MCF 10A (cell line): ENCODE measurements at regions of chr2 and their contacts with region 1.

Region 1: GRCh38 chr2:63698825-63699548 is 110.2 kb downstream of the MDH1 start:
- DNase-seq: peak; percentile 92
- H3K4me3 Mint-ChIP-seq: peak overlapping the region; percentile 5
- H3K27ac Mint-ChIP-seq: peak overlapping the region; percentile 57
- H3K4me1 Mint-ChIP-seq: peaks cover 22% of the 10 kb centered on the region
- H3K27me3 Mint-ChIP-seq: no peaks in the 10 kb centered on the region
- CTCF ChIP-seq: peak; percentile 47

Region 2: GRCh38 chr2:63665846-63666475 is 33.0 kb before region 1 on chr2:
- CTCF ChIA-PET with region 1: no interaction called
- POLR2A ChIA-PET with region 1: no interaction called
- intact Hi-C with region 1: no loop called
- DNase-seq: peak; percentile 31
- H3K4me3 Mint-ChIP-seq: no peak overlapping the region
- H3K27ac Mint-ChIP-seq: peak overlapping the region; percentile 4
- H3K4me1 Mint-ChIP-seq: peaks cover 31% of the 10 kb centered on the region
- H3K27me3 Mint-ChIP-seq: no peaks in the 10 kb centered on the region
- CTCF ChIP-seq: no peak

Region 3: DNA sequence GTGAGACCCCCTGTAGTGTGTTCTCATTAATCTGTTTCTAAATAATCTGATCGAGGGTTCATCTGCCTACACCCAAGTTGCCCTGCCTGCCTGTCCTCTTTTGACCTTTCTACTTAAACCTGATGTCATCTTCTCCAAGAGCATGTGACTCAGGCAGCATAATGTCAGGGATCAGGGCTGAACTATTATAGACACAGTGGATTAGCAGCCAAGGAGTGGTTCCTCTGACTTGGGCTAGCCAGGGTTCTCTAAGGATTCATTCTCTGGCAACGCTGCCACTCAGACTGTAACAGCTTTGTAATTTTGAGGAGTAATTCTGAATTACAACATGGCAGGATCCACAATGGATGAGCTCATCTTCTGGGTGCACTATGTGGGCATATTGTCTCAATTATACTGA is 13.8 kb after region 1 on chr2:
- CTCF ChIA-PET with region 1: interaction called, 3 read pairs
- POLR2A ChIA-PET with region 1: interaction called, 10 read pairs
- intact Hi-C with region 1: no loop called
- DNase-seq: no peak
- H3K4me3 Mint-ChIP-seq: no peak overlapping the region
- H3K27ac Mint-ChIP-seq: no peak overlapping the region
- H3K4me1 Mint-ChIP-seq: no peaks in the 10 kb centered on the region
- H3K27me3 Mint-ChIP-seq: no peaks in the 10 kb centered on the region
- CTCF ChIP-seq: no peak

Region 4: DNA sequence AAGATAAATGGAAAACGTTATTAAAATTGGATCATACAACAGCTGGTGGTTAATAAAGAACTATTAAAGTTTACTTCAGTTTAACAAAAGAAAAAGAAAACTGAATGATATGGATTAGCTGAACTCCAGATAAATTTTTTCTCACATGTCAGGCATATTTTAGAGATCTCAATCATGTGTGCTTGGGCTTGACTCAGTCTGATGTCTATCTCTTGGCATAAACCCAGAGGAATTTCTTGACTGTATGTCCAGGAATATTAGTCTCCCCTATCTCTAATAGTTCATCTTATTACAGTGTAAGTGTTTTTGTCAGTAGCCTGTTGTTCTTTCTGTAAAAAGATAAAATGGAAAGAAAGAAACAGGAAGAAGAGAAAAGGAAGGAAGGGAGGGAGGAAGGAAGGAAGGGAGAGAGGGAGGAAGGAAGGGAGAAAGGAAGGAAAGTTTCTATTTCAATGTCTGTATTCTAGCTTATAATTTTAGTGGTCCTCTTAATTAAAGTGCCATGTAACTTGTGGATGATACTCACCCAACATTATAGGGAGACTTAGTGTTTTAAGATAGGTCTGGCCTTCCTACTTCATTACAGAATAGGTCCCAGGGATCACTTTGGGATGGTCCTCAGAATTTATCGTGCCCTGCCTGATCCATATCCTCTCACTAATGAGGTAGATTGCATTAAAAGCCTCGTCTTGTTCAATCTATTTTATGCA is 43.0 kb after region 1 on chr2:
- CTCF ChIA-PET with region 1: interaction called, 18 read pairs
- POLR2A ChIA-PET with region 1: interaction called, 62 read pairs
- intact Hi-C with region 1: no loop called
- DNase-seq: no peak
- H3K4me3 Mint-ChIP-seq: no peak overlapping the region
- H3K27ac Mint-ChIP-seq: peak overlapping the region; percentile 12
- H3K4me1 Mint-ChIP-seq: peaks cover 34% of the 10 kb centered on the region
- H3K27me3 Mint-ChIP-seq: no peaks in the 10 kb centered on the region
- CTCF ChIP-seq: no peak

Region 5: DNA sequence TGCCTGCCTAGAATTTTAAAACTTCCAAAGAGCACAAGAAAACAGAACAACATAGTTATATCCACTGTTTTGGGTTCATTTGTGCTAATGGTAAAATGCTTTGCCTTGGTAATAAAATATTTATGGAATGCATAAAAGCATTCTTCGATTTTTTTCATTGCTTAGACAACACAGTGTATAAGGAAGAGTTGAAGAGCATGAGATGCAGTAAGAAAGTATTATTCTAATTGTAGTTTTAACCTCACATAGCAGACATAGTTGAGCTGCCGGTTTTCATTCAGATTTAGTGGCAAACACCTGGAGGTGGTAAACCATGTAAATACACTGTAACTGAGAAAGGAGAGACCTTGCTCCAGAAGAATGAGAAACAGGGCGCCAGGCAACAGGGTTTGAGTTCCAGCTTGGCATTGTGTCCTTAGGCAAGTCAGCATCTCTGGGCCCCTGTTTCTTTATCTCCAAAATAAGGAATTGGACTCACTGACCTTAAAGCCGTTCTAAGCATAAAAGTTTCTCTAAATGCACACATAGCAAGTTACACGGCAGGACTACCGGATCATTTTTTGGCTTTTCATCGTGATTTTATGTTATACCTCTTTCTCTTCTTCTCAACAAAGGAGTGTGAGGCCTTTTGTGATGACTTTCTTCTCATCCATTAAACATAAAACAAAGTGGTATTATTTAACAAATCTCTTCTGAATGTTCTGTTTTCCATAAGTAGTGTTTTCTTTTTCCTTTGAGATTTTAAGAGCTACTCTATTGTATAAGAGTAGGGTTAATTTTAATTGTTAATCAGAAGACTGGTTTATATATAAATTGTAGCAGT is 150.6 kb after region 1 on chr2:
- CTCF ChIA-PET with region 1: interaction called, 114 read pairs
- POLR2A ChIA-PET with region 1: interaction called, 229 read pairs
- intact Hi-C with region 1: no loop called
- DNase-seq: no peak
- H3K4me3 Mint-ChIP-seq: no peak overlapping the region
- H3K27ac Mint-ChIP-seq: peak overlapping the region; percentile 91
- H3K4me1 Mint-ChIP-seq: peaks cover 55% of the 10 kb centered on the region
- H3K27me3 Mint-ChIP-seq: no peaks in the 10 kb centered on the region
- CTCF ChIP-seq: no peak

Region 6: GRCh38 chr2:63875131-63875527 is 176.1 kb after region 1 on chr2:
- CTCF ChIA-PET with region 1: interaction called, 16 read pairs
- POLR2A ChIA-PET with region 1: interaction called, 34 read pairs
- intact Hi-C with region 1: no loop called
- DNase-seq: peak; percentile 35
- H3K4me3 Mint-ChIP-seq: peak overlapping the region; percentile 57
- H3K27ac Mint-ChIP-seq: peak overlapping the region; percentile 98
- H3K4me1 Mint-ChIP-seq: peaks cover 52% of the 10 kb centered on the region
- H3K27me3 Mint-ChIP-seq: no peaks in the 10 kb centered on the region
- CTCF ChIP-seq: no peak

Region 7: GRCh38 chr2:63899639-63900038 is 200.7 kb after region 1 on chr2:
- CTCF ChIA-PET with region 1: interaction called, 10 read pairs
- POLR2A ChIA-PET with region 1: interaction called, 7 read pairs
- intact Hi-C with region 1: no loop called
- DNase-seq: no peak
- H3K4me3 Mint-ChIP-seq: no peak overlapping the region
- H3K27ac Mint-ChIP-seq: no peak overlapping the region
- H3K4me1 Mint-ChIP-seq: no peaks in the 10 kb centered on the region
- H3K27me3 Mint-ChIP-seq: no peaks in the 10 kb centered on the region
- CTCF ChIP-seq: no peak

Region 8: DNA sequence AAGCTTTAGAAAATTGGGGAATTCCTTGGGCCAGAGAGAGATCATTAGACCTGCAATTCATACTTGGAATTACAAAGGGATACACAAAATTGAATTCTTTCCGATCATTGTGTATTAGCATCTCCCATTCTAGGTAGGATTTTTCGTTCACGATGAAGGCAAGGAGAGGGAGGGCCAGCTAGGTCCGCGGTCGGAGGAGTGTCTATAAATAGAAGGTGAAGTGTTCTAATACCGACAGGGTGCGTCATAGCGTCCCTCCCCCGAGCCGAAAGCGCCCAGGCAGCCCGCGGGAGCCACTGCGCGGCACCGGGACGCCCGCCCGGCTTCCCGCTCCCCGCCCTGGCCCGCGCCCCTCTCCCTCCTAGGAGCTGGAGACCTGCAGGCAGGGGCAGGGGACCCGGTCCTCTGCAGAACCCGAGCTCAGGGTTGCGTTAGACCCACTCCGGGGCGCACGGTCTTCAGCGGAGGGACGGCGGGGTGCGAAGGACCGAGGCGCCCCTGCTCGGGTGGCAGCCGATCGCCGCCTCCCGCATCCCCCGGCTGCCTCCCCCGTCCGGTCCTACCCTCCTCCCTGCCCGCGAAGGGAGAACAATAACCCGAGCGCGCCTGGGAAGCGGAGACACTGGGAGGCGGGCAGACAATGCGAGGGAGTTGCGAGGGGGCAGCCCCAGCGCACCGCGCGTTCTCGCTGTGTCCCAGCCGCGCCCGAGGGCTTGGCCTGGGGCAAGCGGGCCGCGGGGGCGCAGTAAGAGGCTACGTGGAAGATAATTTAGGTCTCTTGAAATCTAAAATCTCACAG is 1068.9 kb after region 1 on chr2:
- CTCF ChIA-PET with region 1: no interaction called
- POLR2A ChIA-PET with region 1: no interaction called
- intact Hi-C with region 1: no loop called
- DNase-seq: peak; percentile 82
- H3K4me3 Mint-ChIP-seq: peak overlapping the region; percentile 74
- H3K27ac Mint-ChIP-seq: peak overlapping the region; percentile 87
- H3K4me1 Mint-ChIP-seq: peaks cover 31% of the 10 kb centered on the region
- H3K27me3 Mint-ChIP-seq: no peaks in the 10 kb centered on the region
- CTCF ChIP-seq: no peak